ENCODE measurements at regions of chr6 and their contacts with region 1.

Region 1: GRCh38 chr6:138817822-138818308 is 22.0 kb downstream of the ECT2L start:
- DNase-seq: no peak
- ATAC-seq: no peak

Region 2: DNA sequence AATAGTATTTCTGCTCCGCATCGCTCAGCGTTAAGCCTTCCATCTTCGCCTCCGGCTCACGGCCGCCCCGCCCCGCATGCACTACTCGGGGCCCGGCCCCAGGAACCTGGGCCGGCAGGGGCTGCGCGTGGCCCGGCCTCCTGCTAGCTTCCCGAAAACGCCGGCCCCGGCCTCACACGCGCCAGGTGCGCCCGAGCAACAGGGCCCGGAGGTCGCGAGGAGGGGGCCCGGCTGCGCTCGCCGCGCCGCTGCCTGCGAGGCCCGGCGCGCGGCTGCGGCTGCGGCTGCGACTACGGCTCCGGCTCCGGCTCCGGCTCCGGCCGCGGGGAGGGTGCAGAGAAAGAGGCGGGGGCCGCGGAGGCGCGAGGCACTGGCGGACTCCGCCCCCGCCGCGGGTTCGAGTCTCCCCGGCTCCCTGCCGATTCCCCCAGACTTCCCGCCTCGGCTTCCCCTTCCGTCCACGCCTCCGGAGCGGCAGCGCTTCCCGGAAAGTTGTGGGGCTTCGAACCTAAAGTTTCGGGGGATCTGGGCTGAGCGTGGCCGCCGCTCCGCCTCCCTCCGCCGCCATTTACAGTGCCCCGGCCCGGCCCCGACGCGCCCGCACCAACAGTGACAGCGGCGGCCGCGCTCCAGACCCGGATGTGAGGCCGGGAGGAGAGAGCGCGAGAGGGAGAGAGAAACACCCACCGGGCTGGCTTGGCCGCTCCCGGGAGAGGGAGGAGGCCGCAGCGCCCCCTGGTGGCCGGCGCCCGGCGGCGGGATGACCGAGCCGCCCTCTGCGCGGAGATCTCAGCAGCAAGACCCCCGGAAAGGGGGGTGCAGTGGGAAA is 170.0 kb after region 1 on chr6 and contains the start of gene REPS1:
- intact Hi-C with region 1: loop called (anchors 10 kb)
- DNase-seq: peak; percentile 92
- ATAC-seq: peak; percentile 99
- total RNA-seq, gene REPS1: 46.7 TPM

Region 3: DNA sequence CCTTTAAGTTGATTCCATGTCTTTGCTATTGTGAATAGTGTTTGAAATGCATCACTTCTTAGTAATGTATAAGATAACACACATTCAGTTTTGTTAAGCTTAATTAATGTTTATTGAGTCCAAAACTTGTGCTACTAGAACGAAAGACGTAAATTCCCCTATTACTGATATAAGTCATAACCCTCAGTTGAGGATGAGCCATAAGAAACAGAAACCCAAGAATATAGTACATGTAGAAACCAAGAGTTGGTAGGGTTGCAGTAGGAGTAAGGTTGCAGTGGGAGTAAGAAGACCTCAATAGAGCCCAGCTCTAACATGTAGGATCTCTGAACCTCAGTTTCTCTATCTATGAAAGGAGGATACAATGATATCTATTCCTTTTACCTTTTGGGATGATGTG is 537.3 kb after region 1 on chr6:
- intact Hi-C with region 1: loop called (anchors 10 kb)
- DNase-seq: no peak
- ATAC-seq: no peak

Region 4: GRCh38 chr6:140572129-140572528 is 1754.3 kb after region 1 on chr6:
- intact Hi-C with region 1: no loop called
- DNase-seq: no peak
- ATAC-seq: peak; percentile 48

Measured in sciatic nerve (tissue), 2 donors.